ENCODE measurements at regions of chr11 and their contacts with region 1.

Region 1: DNA sequence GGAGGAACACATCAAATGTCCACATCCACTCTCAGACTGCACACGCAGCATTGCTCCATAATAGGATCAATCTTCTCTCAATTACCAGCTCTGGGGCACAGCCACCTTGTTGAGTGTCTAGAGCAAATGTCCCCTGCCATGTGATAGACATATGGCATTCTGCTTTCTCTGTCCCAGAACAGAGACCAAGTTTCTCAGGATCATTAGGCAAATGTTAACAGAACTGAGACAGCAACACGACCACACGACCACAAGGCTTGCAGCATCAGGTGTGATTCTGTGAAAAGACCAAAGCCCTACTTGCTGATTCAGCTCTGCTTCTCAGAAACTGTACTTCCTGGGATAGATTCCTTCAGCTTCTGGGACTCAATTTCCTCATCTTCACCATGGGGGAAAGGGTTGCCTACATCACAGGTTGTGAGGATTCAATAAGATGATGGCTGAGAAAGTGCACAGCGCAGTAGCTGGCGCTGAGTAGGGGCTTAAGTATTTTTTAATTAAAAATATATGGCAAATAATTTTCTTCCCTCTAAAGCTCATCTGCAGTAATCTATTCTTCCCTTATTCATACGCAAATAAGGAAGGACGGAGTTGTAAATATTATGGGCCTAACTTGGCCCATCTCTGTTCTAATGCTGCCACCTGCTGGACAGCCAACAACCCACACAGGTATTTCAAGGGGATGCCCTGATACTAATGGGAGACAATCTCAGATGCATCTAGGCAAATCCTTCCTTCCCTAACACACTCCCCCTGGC is 54.3 kb upstream of the USP47 start:
- DNase-seq: peak in 1 of 2 experiments; percentile 82
- H3K4me3 ChIP-seq: no peak overlapping the region
- H3K27ac ChIP-seq: no peak overlapping the region
- H3K4me1 ChIP-seq: peaks cover 0 to 8% (median 6%) of the 10 kb centered on the region in 4 experiments; a peak in 4 of 7 replicates
- H3K27me3 ChIP-seq: no peaks in the 10 kb centered on the region
- CTCF ChIP-seq: peak; percentile 53 to 83 (median 81)
- EP300 ChIP-seq: no peak
- POLR2A ChIP-seq: no peak
- RAD21 ChIP-seq: peak; percentile 98

Region 2: GRCh38 chr11:11400635-11401232 is 386.8 kb before region 1 on chr11:
- CTCF ChIA-PET with region 1: interaction called, 24 read pairs
- POLR2A ChIA-PET with region 1: no interaction called
- DNase-seq: peak in 1 of 2 experiments; percentile 70
- H3K4me3 ChIP-seq: no peak overlapping the region
- H3K27ac ChIP-seq: no peak overlapping the region
- H3K4me1 ChIP-seq: peaks cover 0 to 13% (median 4%) of the 10 kb centered on the region in 4 experiments; a peak in 4 of 7 replicates
- H3K27me3 ChIP-seq: no peaks in the 10 kb centered on the region; a peak in 1 of 7 replicates
- CTCF ChIP-seq: peak; percentile 72 to 87 (median 76)
- EP300 ChIP-seq: no peak
- POLR2A ChIP-seq: no peak
- RAD21 ChIP-seq: peak; percentile 79 to 86

Region 3: GRCh38 chr11:11621573-11622319 is 165.7 kb before region 1 on chr11 and contains the start of gene GALNT18:
- CTCF ChIA-PET with region 1: interaction called, 40 read pairs
- POLR2A ChIA-PET with region 1: interaction called, 4 read pairs
- DNase-seq: peak; percentile 85 to 87
- H3K4me3 ChIP-seq: peak within 1 kb of the TSS; percentile 51 to 83 (median 76)
- H3K27ac ChIP-seq: no peak within 1 kb of the TSS
- H3K4me1 ChIP-seq: peaks cover 6 to 14% (median 8%) of the 10 kb centered on the region in 4 experiments; a peak in 6 of 7 replicates
- H3K27me3 ChIP-seq: peaks cover 5 to 31% (median 24%) of the 10 kb centered on the region in 4 experiments
- CTCF ChIP-seq: peak; percentile 39 to 47 (median 41)
- EP300 ChIP-seq: no peak
- POLR2A ChIP-seq: peak in 1 of 2 experiments; percentile 48; a peak in 1 of 3 replicates
- RAD21 ChIP-seq: peak; percentile 21 to 49; a peak in 3 of 4 replicates
- total RNA-seq, gene GALNT18: 5.7 and 6.0 TPM in 2 replicates

Region 4: GRCh38 chr11:11669233-11669846 is 118.1 kb before region 1 on chr11:
- CTCF ChIA-PET with region 1: interaction called, 33 read pairs
- POLR2A ChIA-PET with region 1: no interaction called
- DNase-seq: no peak
- H3K4me3 ChIP-seq: no peak overlapping the region
- H3K27ac ChIP-seq: no peak overlapping the region
- H3K4me1 ChIP-seq: peaks cover 0 to 5% (median 0%) of the 10 kb centered on the region in 4 experiments; a peak in 1 of 7 replicates
- H3K27me3 ChIP-seq: no peaks in the 10 kb centered on the region
- CTCF ChIP-seq: no peak
- EP300 ChIP-seq: no peak
- POLR2A ChIP-seq: no peak
- RAD21 ChIP-seq: no peak

Region 5: DNA sequence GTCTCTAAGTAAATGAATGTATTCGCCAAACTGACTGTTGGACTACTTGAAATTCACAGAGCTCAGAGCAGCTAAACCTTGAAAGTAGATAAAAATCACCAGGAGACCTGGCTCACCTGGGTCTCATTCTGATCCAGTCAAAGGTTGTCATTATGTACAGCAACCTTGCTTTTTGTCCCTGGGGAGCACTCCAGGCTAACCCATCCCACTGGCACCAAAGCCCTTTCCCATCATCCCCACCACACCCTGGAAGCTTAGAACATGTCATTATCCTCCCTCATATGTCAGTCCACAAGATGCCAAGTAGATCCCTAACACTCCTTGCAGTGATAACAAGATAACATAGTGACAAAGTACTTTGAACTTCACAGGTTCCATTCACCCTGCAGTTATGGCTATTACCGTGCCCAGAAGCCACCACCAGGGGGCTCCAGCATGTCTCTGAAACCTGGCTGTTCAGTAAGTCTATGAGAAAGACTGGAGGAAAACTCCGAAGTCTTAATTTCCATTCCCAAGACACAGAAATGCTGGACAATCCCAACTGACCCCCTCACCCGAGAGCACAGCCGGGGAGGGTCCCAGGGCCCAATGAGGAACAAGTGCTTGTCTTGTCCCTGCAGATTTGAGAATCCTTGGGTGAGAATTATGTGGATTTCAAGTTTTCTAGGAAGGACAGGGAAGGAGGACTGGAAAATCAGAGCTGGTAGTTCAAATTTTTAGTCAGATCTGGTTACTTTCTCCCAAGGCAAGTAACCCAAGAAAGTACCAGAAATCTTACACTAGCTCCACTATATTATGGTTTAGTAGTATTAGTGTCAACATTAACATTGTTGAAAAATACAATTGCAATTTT is 11.3 kb after region 1 on chr11:
- CTCF ChIA-PET with region 1: interaction called, 11 read pairs
- POLR2A ChIA-PET with region 1: no interaction called
- DNase-seq: peak in 1 of 2 experiments; percentile 89
- H3K4me3 ChIP-seq: no peak overlapping the region
- H3K27ac ChIP-seq: no peak overlapping the region
- H3K4me1 ChIP-seq: no peaks in the 10 kb centered on the region
- H3K27me3 ChIP-seq: no peaks in the 10 kb centered on the region; a peak in 1 of 7 replicates
- CTCF ChIP-seq: peak; percentile 60 to 91 (median 89)
- EP300 ChIP-seq: no peak
- POLR2A ChIP-seq: no peak
- RAD21 ChIP-seq: peak; percentile 81 to 88

Region 6: GRCh38 chr11:11819466-11819865 is 32.0 kb after region 1 on chr11:
- CTCF ChIA-PET with region 1: no interaction called
- POLR2A ChIA-PET with region 1: no interaction called
- DNase-seq: no peak
- H3K4me3 ChIP-seq: no peak overlapping the region
- H3K27ac ChIP-seq: no peak overlapping the region
- H3K4me1 ChIP-seq: no peaks in the 10 kb centered on the region
- H3K27me3 ChIP-seq: no peaks in the 10 kb centered on the region
- CTCF ChIP-seq: no peak
- EP300 ChIP-seq: no peak
- POLR2A ChIP-seq: no peak
- RAD21 ChIP-seq: no peak

Region 7: GRCh38 chr11:11899401-11899800 is 111.9 kb after region 1 on chr11:
- CTCF ChIA-PET with region 1: no interaction called
- POLR2A ChIA-PET with region 1: no interaction called
- DNase-seq: no peak
- H3K4me3 ChIP-seq: no peak overlapping the region
- H3K27ac ChIP-seq: no peak overlapping the region
- H3K4me1 ChIP-seq: no peaks in the 10 kb centered on the region
- H3K27me3 ChIP-seq: no peaks in the 10 kb centered on the region
- CTCF ChIP-seq: peak in 2 of 3 experiments; percentile 17 to 37; a peak in 1 of 4 replicates
- EP300 ChIP-seq: no peak
- POLR2A ChIP-seq: no peak
- RAD21 ChIP-seq: peak; percentile 36 to 41; a peak in 3 of 4 replicates

Measured in H1 (cell line).